Left cardiac atrium (tissue), 4 donors: ENCODE measurements at regions of chr2 and their contacts with region 1.

Region 1: DNA sequence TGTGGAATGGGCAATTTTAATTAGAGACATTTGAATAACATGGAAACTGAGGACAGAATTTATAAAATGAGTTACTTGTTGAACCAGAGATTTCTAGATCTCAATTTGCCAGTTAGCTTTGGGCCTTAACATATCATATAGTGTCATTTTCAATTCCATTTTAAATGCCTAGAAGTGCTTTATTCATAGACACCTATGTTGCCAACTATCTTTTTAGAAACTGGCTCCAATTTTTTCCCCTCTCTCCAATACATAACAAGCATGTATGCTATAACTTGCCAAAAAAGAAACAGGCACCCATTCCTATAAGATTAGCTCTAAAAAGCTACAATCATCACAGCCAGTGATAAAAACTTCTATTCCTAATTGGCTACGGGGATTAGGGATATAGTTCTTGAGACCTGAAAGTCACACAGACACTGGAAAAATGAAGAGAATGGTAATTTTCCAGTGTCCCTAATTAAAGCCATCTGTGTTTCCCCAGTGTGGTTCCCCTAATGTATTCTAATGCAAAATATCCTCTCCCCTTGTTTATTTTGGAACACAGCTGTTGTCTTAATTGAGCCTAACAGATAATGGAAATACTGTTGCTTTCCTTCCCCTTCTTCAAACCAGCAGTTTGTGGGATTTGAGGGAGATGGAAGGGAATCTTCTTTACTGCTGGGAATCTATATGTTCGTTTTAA is 205.5 kb upstream of the FSHR start:
- DNase-seq: no peak
- ATAC-seq: no peak

Region 2: DNA sequence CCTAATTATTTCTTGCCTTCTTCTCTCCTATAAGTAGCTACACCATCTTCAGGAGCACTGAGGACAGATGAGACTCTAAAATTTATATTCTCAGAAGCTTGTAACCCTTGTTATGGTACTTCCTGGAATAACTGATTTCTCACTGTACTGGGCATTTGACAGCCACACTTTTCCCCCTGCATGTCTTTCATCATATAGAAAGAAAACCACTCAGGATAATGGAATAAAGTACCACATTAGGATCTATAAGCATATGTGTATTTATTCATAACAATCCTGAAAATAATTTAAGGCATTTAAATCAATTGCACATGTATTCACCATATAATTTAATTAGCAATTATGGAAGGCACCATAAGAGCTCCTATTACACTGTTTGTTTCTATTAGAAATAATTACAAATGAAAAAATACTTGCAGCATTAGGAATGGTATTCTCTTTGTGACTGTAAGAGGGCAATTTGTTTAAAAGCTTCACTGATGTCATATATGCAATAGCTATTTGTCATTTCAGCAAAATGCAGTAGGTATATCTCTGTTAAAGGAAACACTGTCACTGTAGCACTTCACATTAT is 11.4 kb after region 1 on chr2:
- intact Hi-C with region 1: loop called in 1 of 2 experiments (anchors 1 kb)
- DNase-seq: no peak
- ATAC-seq: no peak